AG04450 (cell line): ENCODE measurements at regions of chr17 and their contacts with region 1.

Region 1: GRCh38 chr17:40113110-40113906 is 8.5 kb upstream of the MSL1 start:
- DNase-seq: peak; percentile 87
- H3K4me3 ChIP-seq: peak overlapping the region; percentile 54
- H3K27ac ChIP-seq: peak overlapping the region; percentile 84
- H3K27me3 ChIP-seq: no peaks in the 10 kb centered on the region
- CTCF ChIP-seq: peak; percentile 84

Region 2: GRCh38 chr17:40026816-40027613 is 86.3 kb before region 1 on chr17:
- CTCF ChIA-PET with region 1: interaction called, 38 read pairs
- POLR2A ChIA-PET with region 1: interaction called, 3 read pairs
- DNase-seq: peak; percentile 62
- H3K4me3 ChIP-seq: no peak overlapping the region
- H3K27ac ChIP-seq: peak overlapping the region; percentile 21
- H3K27me3 ChIP-seq: no peaks in the 10 kb centered on the region
- CTCF ChIP-seq: peak; percentile 90

Region 3: GRCh38 chr17:40062329-40063186 is 50.8 kb before region 1 on chr17 and contains the start of gene THRA:
- CTCF ChIA-PET with region 1: interaction called, 22 read pairs
- POLR2A ChIA-PET with region 1: interaction called, 10 read pairs
- DNase-seq: no peak
- H3K4me3 ChIP-seq: peak within 1 kb of the TSS; percentile 90
- H3K27ac ChIP-seq: no peak within 1 kb of the TSS
- H3K27me3 ChIP-seq: peaks cover 3% of the 10 kb centered on the region
- CTCF ChIP-seq: 0 out of 2 replicates have a peak, but pooled peaks have one; percentile 15
- polyA plus RNA-seq, gene THRA: 25.2 and 32.0 TPM in 2 replicates

Region 4: GRCh38 chr17:40098846-40099618 is 14.3 kb before region 1 on chr17:
- CTCF ChIA-PET with region 1: interaction called, 62 read pairs
- POLR2A ChIA-PET with region 1: interaction called, 58 read pairs
- DNase-seq: peak; percentile 98
- H3K4me3 ChIP-seq: peak overlapping the region; percentile 76
- H3K27ac ChIP-seq: peak overlapping the region; percentile 85
- H3K27me3 ChIP-seq: no peaks in the 10 kb centered on the region
- CTCF ChIP-seq: no peak

Region 5: DNA sequence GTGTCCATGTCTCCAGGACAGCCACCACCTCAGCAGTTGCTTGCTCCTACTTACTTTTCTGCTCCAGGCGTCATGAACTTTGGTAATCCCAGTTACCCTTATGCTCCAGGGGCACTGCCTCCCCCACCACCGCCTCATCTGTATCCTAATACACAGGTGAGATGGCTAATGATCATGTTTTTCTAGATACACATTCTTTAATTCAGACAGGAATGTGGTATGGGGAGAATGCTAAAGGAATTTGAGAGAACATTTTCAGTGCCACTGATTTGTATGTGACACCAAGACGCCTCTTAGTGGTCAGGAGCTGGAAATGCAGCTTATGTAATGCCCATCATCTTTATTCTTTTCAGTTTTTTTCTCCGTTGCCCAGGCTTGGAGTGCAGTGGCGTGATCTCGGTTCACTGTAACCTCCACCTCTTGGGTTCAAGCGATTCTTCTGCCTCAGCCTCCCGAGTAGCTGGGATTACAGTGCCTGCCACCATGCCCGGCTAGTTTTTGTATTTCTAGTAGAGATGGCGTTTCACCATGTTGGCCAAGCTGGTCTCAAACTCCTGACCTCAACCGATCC is 55.0 kb after region 1 on chr17:
- CTCF ChIA-PET with region 1: interaction called, 33 read pairs
- POLR2A ChIA-PET with region 1: interaction called, 11 read pairs
- DNase-seq: peak; percentile 41
- H3K4me3 ChIP-seq: no peak overlapping the region
- H3K27ac ChIP-seq: no peak overlapping the region
- H3K27me3 ChIP-seq: no peaks in the 10 kb centered on the region
- CTCF ChIP-seq: peak; percentile 78